ENCODE measurements at regions of chr19 and their contacts with region 1.

Region 1: GRCh38 chr19:19006213-19006612 is 27.1 kb downstream of the SUGP2 start:
- DNase-seq: no peak
- ATAC-seq: no peak
- H3K4me3 ChIP-seq: no peak overlapping the region
- H3K27ac ChIP-seq: no peak overlapping the region
- H3K4me1 ChIP-seq: no peaks in the 10 kb centered on the region
- H3K27me3 ChIP-seq: no peaks in the 10 kb centered on the region
- CTCF ChIP-seq: no peak
- EP300 ChIP-seq: no peak
- POLR2A ChIP-seq: no peak
- RAD21 ChIP-seq: no peak

Region 2: DNA sequence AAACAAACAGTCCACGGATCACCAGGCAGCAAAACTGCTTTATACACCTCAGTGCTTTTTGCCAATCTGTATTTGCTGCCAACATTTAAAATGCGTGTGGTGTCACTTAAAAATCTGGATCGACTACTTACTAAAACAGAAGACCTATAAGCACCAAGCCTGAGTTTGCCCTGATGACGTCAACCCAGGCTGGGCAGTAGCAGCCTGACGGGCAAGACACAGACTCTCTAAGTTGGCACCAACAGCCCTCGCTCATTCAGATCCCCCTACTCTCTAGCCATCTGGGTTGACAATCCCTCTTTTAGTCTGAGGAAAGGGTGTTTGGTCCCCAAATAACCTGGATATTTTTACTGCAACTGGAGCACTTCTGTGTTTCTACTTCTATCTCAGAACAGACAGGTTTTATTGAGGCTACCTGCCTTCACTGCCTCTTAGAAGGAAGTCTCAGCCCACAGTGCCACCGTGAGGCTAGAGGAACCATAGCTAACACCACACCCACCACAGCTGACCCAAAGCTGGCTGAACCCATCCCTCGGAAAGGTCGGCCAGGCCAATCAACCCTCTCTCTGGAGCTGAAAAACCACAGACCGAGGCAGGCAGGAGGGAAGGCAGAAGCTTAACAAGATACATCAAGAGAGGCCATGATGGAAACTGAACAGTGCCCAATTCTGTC is 20.2 kb after region 1 on chr19:
- CTCF ChIA-PET with region 1: no interaction called
- POLR2A ChIA-PET with region 1: no interaction called
- in situ Hi-C with region 1: no loop called
- intact Hi-C with region 1: loop called (anchors 2 kb)
- DNase-seq: peak; percentile 24
- ATAC-seq: peak; percentile 78
- H3K4me3 ChIP-seq: no peak overlapping the region
- H3K27ac ChIP-seq: no peak overlapping the region
- H3K4me1 ChIP-seq: peaks cover 54% of the 10 kb centered on the region
- H3K27me3 ChIP-seq: no peaks in the 10 kb centered on the region
- CTCF ChIP-seq: peak; percentile 61
- EP300 ChIP-seq: no peak
- POLR2A ChIP-seq: no peak
- RAD21 ChIP-seq: no peak

Measured in HepG2 (cell line).